ENCODE measurements at regions of chr19 and their contacts with region 1.

Region 1: DNA sequence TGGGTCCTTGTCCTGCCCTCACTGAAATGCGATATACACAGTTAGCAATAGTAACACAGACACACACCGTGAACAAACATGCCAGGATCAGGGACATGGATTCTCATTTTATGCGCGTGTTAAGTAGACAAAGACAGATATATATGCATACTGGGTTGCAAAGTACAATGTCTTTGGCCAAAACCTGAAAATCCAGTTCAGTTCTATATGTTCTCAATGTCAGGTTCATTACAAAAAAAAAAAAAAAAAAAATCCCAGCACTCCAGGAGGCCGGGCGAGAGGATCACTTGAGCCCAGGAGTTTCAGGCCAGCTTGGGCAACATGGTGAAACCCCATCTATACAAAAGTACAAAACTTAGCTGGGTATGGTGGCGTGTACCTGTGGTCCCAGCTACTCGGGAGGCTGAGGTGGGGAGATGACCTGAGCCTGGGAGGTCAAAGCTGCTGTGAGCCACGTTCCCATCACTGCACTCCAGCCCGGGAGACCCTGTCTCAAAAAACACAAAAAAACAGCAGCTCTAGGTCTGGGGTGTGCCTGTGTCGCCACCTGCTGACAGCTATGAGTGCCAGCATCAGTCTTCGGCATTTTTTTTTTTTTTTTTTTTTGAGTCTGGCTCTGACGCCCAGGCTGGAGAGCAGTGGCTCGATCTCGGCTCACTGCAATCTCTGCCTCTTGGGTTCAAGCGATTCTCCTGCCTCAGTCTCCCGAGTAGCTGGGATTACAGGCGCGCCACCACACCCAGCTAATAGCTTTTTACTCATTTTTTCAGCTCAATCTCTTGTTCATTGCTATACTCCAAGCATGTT is 10.3 kb downstream of the AP2S1 start:
- DNase-seq: peak; percentile 57 to 63 (median 60)
- H3K4me3 ChIP-seq: no peak overlapping the region
- H3K4me3 Mint-ChIP-seq: no peak overlapping the region
- H3K27ac ChIP-seq: no peak overlapping the region
- H3K27ac Mint-ChIP-seq: peak overlapping the region in 6 of 7 donors; percentile 32 to 56 (median 50)
- H3K4me1 ChIP-seq: peaks cover 3% of the 10 kb centered on the region
- H3K4me1 Mint-ChIP-seq: peaks cover 0 to 4% (median 3%) of the 10 kb centered on the region in 4 donors
- H3K27me3 ChIP-seq: no peaks in the 10 kb centered on the region
- H3K27me3 Mint-ChIP-seq: no peaks in the 10 kb centered on the region

Region 2: GRCh38 chr19:46579361-46579879 is 260.9 kb before region 1 on chr19:
- CTCF ChIA-PET with region 1: no interaction called
- POLR2A ChIA-PET with region 1: no interaction called
- intact Hi-C with region 1: no loop called
- DNase-seq: peak in 4 of 5 donors; percentile 25 to 58 (median 36)
- H3K4me3 ChIP-seq: no peak overlapping the region
- H3K4me3 Mint-ChIP-seq: no peak overlapping the region
- H3K27ac ChIP-seq: no peak overlapping the region
- H3K27ac Mint-ChIP-seq: peak overlapping the region in 4 of 7 donors; percentile 57 to 80 (median 64)
- H3K4me1 ChIP-seq: peaks cover 4% of the 10 kb centered on the region
- H3K4me1 Mint-ChIP-seq: peaks cover 5 to 22% (median 14%) of the 10 kb centered on the region in 4 donors
- H3K27me3 ChIP-seq: no peaks in the 10 kb centered on the region
- H3K27me3 Mint-ChIP-seq: no peaks in the 10 kb centered on the region

Region 3: DNA sequence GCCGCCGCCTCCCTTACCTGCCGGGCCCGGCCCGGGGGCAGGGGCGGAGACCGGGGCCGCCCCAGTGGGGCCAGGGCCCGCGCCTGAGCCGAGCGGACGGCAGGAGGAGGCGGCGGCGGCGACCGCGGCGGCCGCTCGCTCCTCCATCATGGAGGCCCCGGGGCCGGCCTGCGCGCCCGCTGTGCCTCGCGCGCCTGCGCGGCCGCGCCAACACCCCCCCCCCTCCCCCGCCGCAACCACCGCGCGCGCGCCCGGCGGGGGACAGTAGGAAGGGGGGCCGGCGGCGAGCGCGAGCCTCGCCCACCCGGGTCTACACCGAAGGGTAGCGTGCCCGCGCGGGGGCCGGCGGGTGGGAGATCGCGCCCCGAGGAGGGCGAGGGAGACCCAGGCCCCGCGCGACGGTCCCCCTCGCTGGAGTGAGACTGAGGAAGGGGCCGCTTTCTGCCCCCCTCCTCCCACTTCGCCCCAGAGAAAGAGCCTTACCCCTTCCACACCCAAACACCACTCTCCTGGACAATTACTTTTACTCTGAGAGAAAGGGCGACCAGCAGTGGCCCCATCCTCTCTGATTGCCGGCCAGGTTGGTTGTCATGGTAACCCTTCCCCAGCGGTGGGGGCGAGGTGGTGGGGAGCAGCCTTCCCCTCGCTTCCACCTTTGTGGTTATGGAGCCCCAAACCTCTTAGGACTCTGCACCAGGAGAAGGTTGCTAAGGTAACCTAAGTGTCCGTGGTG is 93.9 kb before region 1 on chr19 and contains the start of gene STRN4:
- CTCF ChIA-PET with region 1: interaction called, 335 read pairs
- POLR2A ChIA-PET with region 1: interaction called, 4 read pairs
- intact Hi-C with region 1: no loop called
- DNase-seq: peak; percentile 49 to 74 (median 52)
- H3K4me3 ChIP-seq: peak within 1 kb of the TSS; percentile 54 to 80
- H3K4me3 Mint-ChIP-seq: peak within 1 kb of the TSS; percentile 88 to 94 (median 90)
- H3K27ac ChIP-seq: peak within 1 kb of the TSS; percentile 76
- H3K27ac Mint-ChIP-seq: peak within 1 kb of the TSS; percentile 92 to 96 (median 95)
- H3K4me1 ChIP-seq: peaks cover 35% of the 10 kb centered on the region
- H3K4me1 Mint-ChIP-seq: peaks cover 35 to 64% (median 49%) of the 10 kb centered on the region in 4 donors
- H3K27me3 ChIP-seq: no peaks in the 10 kb centered on the region
- H3K27me3 Mint-ChIP-seq: no peaks in the 10 kb centered on the region
- total RNA-seq, gene STRN4: 81.2 to 88.8 TPM

Region 4: DNA sequence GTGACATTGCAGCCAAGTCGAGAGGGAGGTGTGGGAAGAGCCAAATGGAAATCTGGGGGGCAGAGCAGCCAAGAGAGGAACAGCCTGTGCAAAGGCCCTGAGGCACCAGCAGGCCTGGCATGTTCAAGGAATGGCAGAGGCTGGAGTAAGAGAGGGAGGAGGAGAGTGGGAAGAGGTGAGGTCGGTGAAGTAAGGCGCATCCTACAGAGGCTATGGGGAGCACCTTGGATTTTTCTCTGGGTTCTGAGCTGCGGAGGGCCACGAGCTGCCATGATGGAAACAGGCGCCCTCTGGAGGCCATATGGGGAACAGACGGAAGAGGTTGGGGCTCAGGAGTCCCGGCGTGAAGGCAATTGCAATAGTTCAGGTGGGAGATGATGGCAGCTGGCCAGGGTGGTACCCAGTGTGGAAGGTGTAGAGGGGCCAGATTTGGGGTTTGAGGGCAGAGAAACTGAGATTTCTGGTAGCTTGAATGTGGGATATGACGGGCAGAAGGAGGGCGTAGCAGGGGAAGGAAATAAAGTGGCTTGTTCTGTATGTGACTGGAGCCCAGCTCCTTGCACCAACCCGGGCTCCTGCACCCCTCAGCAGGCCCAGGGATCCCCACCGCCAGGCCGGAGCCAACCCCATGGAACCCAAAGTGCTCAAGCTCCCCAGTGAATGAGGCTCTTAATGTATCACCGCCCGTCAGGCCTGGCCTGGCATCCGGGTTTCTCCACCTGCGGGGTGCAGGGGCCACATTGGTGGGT is 73.6 kb before region 1 on chr19:
- CTCF ChIA-PET with region 1: interaction called, 335 read pairs
- POLR2A ChIA-PET with region 1: no interaction called
- intact Hi-C with region 1: no loop called
- DNase-seq: peak; percentile 51 to 66 (median 58)
- H3K4me3 ChIP-seq: no peak overlapping the region
- H3K4me3 Mint-ChIP-seq: peak overlapping the region in 1 of 8 donors; percentile 39
- H3K27ac ChIP-seq: no peak overlapping the region
- H3K27ac Mint-ChIP-seq: peak overlapping the region in 1 of 7 donors; percentile 53
- H3K4me1 ChIP-seq: no peaks in the 10 kb centered on the region
- H3K4me1 Mint-ChIP-seq: peaks cover 2 to 6% (median 5%) of the 10 kb centered on the region in 4 donors
- H3K27me3 ChIP-seq: no peaks in the 10 kb centered on the region
- H3K27me3 Mint-ChIP-seq: no peaks in the 10 kb centered on the region

Region 5: GRCh38 chr19:46809536-46810272 is 30.6 kb before region 1 on chr19:
- CTCF ChIA-PET with region 1: interaction called, 13 read pairs
- POLR2A ChIA-PET with region 1: no interaction called
- intact Hi-C with region 1: no loop called
- DNase-seq: no peak
- H3K4me3 ChIP-seq: no peak overlapping the region
- H3K4me3 Mint-ChIP-seq: no peak overlapping the region
- H3K27ac ChIP-seq: no peak overlapping the region
- H3K27ac Mint-ChIP-seq: no peak overlapping the region
- H3K4me1 ChIP-seq: no peaks in the 10 kb centered on the region
- H3K4me1 Mint-ChIP-seq: no peaks in the 10 kb centered on the region
- H3K27me3 ChIP-seq: no peaks in the 10 kb centered on the region
- H3K27me3 Mint-ChIP-seq: peaks cover 0 to 2% of the 10 kb centered on the region in 2 donors

Region 6: GRCh38 chr19:46828484-46828883 is 11.9 kb before region 1 on chr19:
- CTCF ChIA-PET with region 1: interaction called, 21 read pairs
- POLR2A ChIA-PET with region 1: no interaction called
- intact Hi-C with region 1: no loop called
- DNase-seq: peak in 1 of 5 donors; percentile 56
- H3K4me3 ChIP-seq: no peak overlapping the region
- H3K4me3 Mint-ChIP-seq: no peak overlapping the region
- H3K27ac ChIP-seq: no peak overlapping the region
- H3K27ac Mint-ChIP-seq: no peak overlapping the region
- H3K4me1 ChIP-seq: no peaks in the 10 kb centered on the region
- H3K4me1 Mint-ChIP-seq: peaks cover 0 to 8% (median 3%) of the 10 kb centered on the region in 4 donors
- H3K27me3 ChIP-seq: no peaks in the 10 kb centered on the region
- H3K27me3 Mint-ChIP-seq: no peaks in the 10 kb centered on the region

Measured in CD4-positive, alpha-beta memory T cell (primary cell).